ENCODE measurements at regions of chr1 and their contacts with region 1.

Region 1: DNA sequence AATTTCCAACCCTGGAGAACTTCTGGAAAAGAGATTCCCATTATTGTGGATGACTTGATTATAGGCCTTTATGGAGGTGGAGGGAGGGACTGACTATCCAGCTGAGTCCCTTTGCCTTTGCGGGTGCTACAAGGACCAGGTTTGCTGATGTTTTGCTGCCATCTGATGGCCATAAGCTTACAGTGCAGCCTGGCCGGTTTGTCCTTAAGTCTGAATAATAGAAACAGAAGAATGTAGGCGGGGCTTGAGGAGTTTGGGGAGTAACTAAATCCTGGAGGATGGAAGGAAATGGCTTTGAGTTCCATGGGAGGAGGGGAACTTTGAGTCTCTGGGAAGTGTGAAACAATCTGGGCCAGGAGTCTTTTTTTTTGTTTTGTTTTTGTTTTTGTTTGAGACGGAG is 55.7 kb upstream of the CD1D start:
- DNase-seq: peak; percentile 97
- H3K4me3 ChIP-seq: no peak overlapping the region
- H3K27ac ChIP-seq: no peak overlapping the region
- H3K4me1 ChIP-seq: no peaks in the 10 kb centered on the region
- H3K27me3 ChIP-seq: peaks cover 0 to 7% (median 0%) of the 10 kb centered on the region in 4 donors
- CTCF ChIP-seq: peak; percentile 92 to 99 (median 92)
- EP300 ChIP-seq: no peak
- POLR2A ChIP-seq: no peak

Region 2: DNA sequence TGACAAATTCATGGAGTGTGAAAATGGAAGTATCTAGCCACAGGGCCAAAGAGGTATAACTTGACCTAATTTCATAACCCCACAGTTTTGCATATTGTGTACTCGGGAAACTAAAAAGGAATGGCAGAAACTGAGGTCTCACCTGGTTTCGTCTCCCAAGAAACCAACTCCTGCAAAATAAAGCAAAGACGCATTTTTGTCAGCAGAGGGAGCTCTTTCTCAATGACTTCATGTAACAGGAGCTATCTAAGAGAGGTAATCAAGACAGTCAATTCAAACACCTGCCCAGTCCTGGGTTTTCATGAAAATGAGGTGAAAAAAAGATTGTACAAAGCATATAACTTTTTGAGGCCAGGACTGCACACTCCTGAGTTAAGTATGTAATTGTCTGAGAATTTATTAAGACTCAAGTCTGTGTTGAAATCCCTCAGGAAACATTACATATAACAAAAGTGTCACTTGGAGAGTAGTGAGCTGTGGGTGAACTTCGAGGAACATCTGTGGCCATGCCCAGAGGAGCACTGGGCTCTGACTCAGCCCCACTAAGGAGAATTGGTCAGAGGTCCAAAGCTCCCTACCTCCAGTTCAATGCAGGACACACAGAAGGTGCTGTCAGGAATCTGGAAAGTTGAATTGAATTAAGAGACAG is 544.7 kb before region 1 on chr1:
- intact Hi-C with region 1: loop called (anchors 5 kb)
- DNase-seq: peak; percentile 64
- H3K4me3 ChIP-seq: no peak overlapping the region
- H3K27ac ChIP-seq: no peak overlapping the region
- H3K4me1 ChIP-seq: no peaks in the 10 kb centered on the region
- H3K27me3 ChIP-seq: peaks cover 0 to 9% (median 0%) of the 10 kb centered on the region in 4 donors
- CTCF ChIP-seq: peak; percentile 45 to 65 (median 45)
- EP300 ChIP-seq: no peak
- POLR2A ChIP-seq: no peak

Region 3: DNA sequence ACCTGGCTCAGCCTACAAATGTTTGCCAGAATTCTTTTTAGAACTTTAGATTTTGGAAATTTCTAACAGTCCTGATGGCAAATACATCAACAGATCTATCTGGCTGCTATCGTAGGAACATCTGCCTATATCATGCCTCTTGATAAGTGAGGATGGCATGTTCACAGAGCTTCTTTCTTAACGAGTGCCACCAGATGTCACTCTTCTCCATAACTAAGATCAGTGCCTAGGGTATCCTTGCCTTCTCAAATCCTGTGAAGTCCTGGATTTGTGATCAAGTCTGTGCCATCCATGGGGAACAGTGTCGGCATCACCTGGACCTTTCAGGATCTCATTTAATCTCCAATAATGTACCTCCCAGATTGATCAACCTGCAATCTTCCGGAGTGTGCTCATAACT is 246.9 kb before region 1 on chr1:
- intact Hi-C with region 1: no loop called
- DNase-seq: no peak
- H3K4me3 ChIP-seq: no peak overlapping the region
- H3K27ac ChIP-seq: no peak overlapping the region
- H3K4me1 ChIP-seq: no peaks in the 10 kb centered on the region
- H3K27me3 ChIP-seq: no peaks in the 10 kb centered on the region
- CTCF ChIP-seq: peak in 1 of 3 experiments; percentile 8
- EP300 ChIP-seq: no peak
- POLR2A ChIP-seq: no peak

Region 4: GRCh38 chr1:157963713-157964112 is 161.3 kb before region 1 on chr1:
- intact Hi-C with region 1: loop called (anchors 2 kb)
- DNase-seq: no peak
- H3K4me3 ChIP-seq: no peak overlapping the region
- H3K27ac ChIP-seq: no peak overlapping the region
- H3K4me1 ChIP-seq: peaks cover 0 to 11% (median 6%) of the 10 kb centered on the region in 4 donors
- H3K27me3 ChIP-seq: peaks cover 0 to 27% (median 0%) of the 10 kb centered on the region in 4 donors
- CTCF ChIP-seq: peak; percentile 87 to 94 (median 94)
- EP300 ChIP-seq: no peak
- POLR2A ChIP-seq: no peak

Region 5: DNA sequence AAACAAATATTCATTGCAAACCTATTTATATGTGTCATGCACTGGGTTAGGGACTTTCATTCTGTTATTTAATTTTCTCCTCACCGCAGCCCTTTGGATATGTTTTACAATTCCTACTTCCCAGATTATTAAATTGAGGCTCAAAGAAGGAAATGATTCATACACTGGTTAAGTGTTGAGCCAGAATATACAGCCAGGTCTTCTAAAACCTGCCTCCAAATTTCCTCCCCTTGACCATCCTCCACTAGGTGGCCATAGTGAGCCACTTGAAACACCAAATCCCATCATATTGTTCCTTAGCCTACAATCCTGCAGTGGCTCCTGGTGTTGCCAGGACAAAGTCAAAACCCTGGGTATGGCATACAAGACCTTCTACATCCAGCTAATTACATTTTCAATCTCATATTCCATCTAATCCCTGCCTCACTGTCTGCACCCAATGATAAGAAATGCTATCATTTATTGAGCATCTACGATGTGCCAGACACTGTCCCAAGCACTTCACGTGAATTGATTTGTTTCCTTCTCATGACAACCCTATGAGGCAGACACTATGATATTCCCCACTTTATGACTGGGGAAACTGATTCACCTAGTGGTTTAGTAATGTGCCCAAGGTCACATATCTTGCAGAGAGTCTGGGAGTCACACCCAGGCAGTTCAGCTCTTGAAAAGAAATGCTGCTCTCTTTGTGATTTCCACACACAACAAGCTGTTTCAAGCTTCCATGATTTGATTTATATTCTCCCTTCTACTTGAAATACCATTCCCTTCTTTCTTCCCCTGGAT is 155.1 kb before region 1 on chr1:
- intact Hi-C with region 1: loop called (anchors 2 kb)
- DNase-seq: no peak
- H3K4me3 ChIP-seq: no peak overlapping the region
- H3K27ac ChIP-seq: no peak overlapping the region
- H3K4me1 ChIP-seq: peaks cover 7 to 16% (median 13%) of the 10 kb centered on the region in 4 donors
- H3K27me3 ChIP-seq: no peaks in the 10 kb centered on the region
- CTCF ChIP-seq: peak; percentile 60 to 82 (median 70)
- EP300 ChIP-seq: no peak
- POLR2A ChIP-seq: no peak

Region 6: DNA sequence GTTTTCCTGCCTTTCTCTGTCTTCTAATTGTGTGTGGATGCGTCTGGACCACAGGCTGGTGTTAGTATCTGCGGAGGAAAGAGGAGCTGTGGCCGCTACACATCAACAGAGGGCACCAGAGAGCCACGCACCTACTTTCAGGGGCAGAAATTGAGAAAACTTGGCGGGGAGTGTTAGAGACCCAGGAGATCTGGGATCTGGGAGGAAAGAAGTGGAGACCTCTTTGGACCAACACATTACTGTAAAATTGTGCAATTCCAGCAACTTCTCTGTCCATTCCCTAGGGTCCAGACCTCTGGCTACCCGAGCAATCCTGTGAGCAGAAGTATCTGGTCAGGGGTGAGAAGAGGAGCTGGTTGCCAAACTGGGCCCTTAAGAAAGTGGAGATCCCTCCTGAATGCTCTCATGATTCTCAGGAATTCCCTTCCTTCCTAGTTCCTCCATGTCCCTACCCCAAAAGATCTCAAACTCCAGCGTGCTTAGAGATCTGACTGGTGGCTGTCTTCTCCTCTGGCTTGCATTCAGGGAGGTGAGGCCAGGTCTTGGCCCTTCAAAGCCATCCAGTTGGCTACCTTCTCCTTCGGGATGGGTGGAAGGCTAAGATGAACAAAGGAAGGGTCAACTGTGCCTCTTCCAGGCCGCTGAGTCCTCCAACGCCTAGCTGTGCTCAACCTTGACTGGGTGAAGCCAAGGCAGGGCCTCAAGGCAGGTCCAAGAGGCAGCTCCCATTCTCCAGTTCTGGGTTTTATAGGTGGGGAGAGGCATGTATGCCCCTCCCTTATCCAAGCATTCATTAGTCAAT is 132.8 kb before region 1 on chr1:
- intact Hi-C with region 1: loop called (anchors 5 kb)
- DNase-seq: no peak
- H3K4me3 ChIP-seq: peak overlapping the region in 2 of 4 donors; percentile 69 to 94
- H3K27ac ChIP-seq: peak overlapping the region; percentile 85 to 95 (median 94)
- H3K4me1 ChIP-seq: peaks cover 24 to 50% (median 48%) of the 10 kb centered on the region in 4 donors
- H3K27me3 ChIP-seq: peaks cover 0 to 8% (median 0%) of the 10 kb centered on the region in 4 donors
- CTCF ChIP-seq: peak; percentile 91 to 97 (median 93)
- EP300 ChIP-seq: no peak
- POLR2A ChIP-seq: no peak